ENCODE measurements at regions of chr11 and their contacts with region 1.

Region 1: GRCh38 chr11:72026090-72026489 is 27.4 kb downstream of the IL18BP start:
- DNase-seq: no peak
- ATAC-seq: no peak
- H3K4me3 ChIP-seq: no peak overlapping the region
- H3K27ac ChIP-seq: no peak overlapping the region
- H3K4me1 ChIP-seq: peaks cover 0 to 13% (median 10%) of the 10 kb centered on the region in 3 donors
- H3K27me3 ChIP-seq: no peaks in the 10 kb centered on the region
- CTCF ChIP-seq: no peak

Region 2: DNA sequence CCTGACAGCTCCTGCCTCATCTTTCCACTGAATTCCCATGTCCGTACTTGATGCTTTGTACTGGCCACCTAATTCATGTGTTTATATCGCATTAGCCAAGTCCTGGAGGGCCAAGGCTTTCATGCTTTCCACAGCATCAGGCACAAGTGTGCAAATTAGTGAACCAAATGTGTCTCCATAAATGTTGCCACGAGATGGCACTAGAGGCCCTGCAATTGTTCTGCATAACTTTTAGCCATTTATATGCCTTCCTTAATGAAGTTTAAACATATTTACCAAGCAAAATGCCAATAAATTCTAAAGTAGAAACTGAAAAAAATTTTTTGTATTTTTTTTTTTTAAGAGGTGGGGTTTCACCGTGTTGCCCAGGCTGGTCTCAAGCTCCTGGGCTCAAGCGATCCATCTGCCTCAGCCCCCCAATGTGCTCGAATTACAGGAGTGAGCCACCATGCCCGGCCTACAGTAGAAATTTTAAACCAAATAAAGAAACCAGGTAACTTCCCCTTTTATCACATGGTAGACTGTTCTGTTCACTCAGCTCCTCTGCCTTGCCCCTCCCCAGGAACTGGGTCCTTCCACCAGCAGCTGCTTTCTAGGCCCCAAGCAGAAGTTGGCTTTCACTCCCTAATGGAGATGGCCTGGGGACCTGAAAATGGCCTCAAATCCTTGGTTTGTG is 48.2 kb before region 1 on chr11:
- intact Hi-C with region 1: no loop called
- DNase-seq: peak in 1 of 6 donors; percentile 63
- ATAC-seq: peak; percentile 75 to 94 (median 88)
- H3K4me3 ChIP-seq: no peak overlapping the region
- H3K27ac ChIP-seq: no peak overlapping the region
- H3K4me1 ChIP-seq: no peaks in the 10 kb centered on the region
- H3K27me3 ChIP-seq: no peaks in the 10 kb centered on the region
- CTCF ChIP-seq: peak; percentile 47 to 70 (median 61)

Region 3: DNA sequence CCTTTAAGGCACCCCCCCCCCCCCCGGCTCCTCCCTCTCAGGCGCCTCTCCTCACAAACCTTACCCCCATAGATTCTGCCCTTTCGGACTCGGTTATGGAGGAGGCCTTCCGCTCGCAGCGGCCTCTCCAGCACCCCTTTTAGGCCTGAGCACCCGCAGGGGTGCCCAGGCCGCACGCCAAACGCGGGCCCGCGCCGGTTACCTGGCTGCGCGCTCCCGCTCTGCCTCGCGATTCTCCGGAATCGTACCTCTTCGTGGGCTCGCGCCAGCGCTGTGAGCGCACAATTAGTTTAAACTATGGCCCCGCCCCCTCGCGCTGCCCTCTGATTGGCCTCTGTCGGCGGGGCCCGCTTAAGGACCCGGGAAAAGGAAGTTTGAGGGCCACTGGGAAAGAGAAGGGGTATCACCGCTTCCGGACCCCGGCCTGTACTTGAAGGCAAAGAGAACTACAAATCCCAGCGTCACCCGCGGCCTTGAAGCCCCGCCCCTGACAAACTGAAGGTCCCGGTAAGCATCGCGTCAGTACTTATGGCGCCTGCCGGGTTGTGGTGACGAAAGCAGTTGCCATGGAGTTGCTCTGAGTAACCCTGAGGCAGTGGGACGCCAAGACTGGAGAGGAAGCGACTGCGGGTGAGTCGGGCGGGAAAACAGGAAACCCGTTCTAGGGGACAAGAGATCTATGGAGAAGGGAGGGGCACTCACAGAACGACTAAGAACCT is 54.3 kb after region 1 on chr11 and contains the starts of genes LRRC51 and NUMA1:
- intact Hi-C with region 1: loop called in 1 of 3 experiments (anchors 10 kb)
- DNase-seq: peak; percentile 94 to 99 (median 99)
- ATAC-seq: peak; percentile 92 to 97 (median 94)
- H3K4me3 ChIP-seq: peak within 1 kb of the TSS; percentile 58 to 85 (median 70)
- H3K27ac ChIP-seq: peak within 1 kb of the TSS; percentile 77 to 90 (median 84)
- H3K4me1 ChIP-seq: peaks cover 0 to 10% (median 5%) of the 10 kb centered on the region in 3 donors
- H3K27me3 ChIP-seq: no peaks in the 10 kb centered on the region
- CTCF ChIP-seq: no peak
- total RNA-seq, gene LRRC51: 3.2 to 8.3 (median 4.9) TPM
- total RNA-seq, gene NUMA1: 68.8 to 138 (median 96.9) TPM

Region 4: DNA sequence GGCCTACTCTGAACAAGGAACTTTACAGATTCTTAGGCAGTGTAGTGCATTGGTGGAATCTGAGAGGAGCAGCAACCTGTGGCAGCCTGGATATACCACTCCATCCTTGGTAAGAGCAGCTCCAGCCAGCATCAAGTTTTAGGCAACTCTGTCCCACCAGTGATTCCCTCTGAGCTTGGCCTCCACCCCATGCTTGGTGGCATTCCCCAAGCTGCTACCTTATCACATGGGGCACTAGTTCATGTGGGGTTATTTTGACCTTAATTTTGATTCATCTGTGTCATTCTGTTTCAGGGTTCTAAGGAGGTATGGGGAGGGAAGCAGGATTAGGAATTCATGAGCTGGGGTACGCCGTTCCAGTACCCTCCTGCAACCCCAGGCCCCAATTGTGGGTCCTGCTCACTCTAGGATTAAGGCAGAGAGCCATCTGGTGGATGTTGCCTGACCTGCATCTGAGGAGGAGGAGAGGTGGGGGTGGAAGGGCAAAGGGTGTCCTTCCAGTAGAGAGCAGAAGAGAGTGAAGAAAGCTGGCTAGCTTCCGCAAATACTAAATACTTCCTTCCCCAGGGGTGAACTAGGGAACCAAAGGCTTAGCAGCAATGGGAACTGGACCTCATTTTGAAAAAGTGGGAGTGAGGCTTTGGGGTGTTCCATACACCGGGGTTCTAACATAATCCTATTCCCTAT is 65.1 kb after region 1 on chr11:
- intact Hi-C with region 1: loop called (anchors 5 to 10 kb)
- DNase-seq: peak in 5 of 6 donors; percentile 61 to 77 (median 68)
- ATAC-seq: peak; percentile 85 to 99 (median 97)
- H3K4me3 ChIP-seq: no peak overlapping the region
- H3K27ac ChIP-seq: no peak overlapping the region
- H3K4me1 ChIP-seq: peaks cover 0 to 4% (median 0%) of the 10 kb centered on the region in 3 donors
- H3K27me3 ChIP-seq: no peaks in the 10 kb centered on the region
- CTCF ChIP-seq: peak; percentile 39 to 77 (median 67)

Region 5: GRCh38 chr11:72102631-72102945 is 76.5 kb after region 1 on chr11:
- intact Hi-C with region 1: no loop called
- DNase-seq: no peak
- ATAC-seq: peak in 1 of 4 donors; percentile 5
- H3K4me3 ChIP-seq: peak overlapping the region; percentile 73 to 91 (median 86)
- H3K27ac ChIP-seq: peak overlapping the region; percentile 87 to 94 (median 91)
- H3K4me1 ChIP-seq: peaks cover 11 to 21% (median 13%) of the 10 kb centered on the region in 3 donors
- H3K27me3 ChIP-seq: no peaks in the 10 kb centered on the region
- CTCF ChIP-seq: no peak

Measured in pancreas (tissue), 10 donors.